ENCODE measurements at regions of chr12 and their contacts with region 1.

Region 1: GRCh38 chr12:84124211-84124610 is 788.4 kb downstream of the SLC6A15 start:
- DNase-seq: no peak
- H3K4me3 Mint-ChIP-seq: no peak overlapping the region
- H3K27ac Mint-ChIP-seq: no peak overlapping the region
- H3K4me1 Mint-ChIP-seq: no peaks in the 10 kb centered on the region
- H3K27me3 Mint-ChIP-seq: no peaks in the 10 kb centered on the region
- CTCF ChIP-seq: no peak

Region 2: DNA sequence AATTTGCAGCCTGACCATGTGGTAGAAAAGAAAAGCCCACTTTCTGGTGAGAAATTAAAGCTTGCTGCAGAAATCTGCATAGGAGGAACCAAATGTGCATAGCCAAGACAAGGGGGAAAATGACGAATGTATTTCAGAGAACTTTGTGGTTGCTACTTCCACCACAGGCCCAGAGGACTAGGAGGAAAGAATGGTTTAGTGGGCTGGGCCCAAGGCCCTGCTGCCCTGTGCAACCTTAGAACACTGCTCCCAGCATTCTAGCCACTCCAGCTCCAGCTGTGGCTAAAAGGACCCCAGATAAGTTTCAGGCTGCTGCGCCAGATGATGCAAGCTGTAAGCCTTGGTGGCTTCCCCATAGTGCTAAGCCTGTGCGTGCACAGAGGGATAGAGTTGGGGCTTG is 24.1 kb after region 1 on chr12:
- CTCF ChIA-PET with region 1: interaction called, 3 read pairs
- POLR2A ChIA-PET with region 1: no interaction called
- intact Hi-C with region 1: loop called (anchors 1 kb)
- DNase-seq: no peak
- H3K4me3 Mint-ChIP-seq: no peak overlapping the region
- H3K27ac Mint-ChIP-seq: no peak overlapping the region
- H3K4me1 Mint-ChIP-seq: peaks cover 6% of the 10 kb centered on the region
- H3K27me3 Mint-ChIP-seq: no peaks in the 10 kb centered on the region
- CTCF ChIP-seq: no peak

Region 3: DNA sequence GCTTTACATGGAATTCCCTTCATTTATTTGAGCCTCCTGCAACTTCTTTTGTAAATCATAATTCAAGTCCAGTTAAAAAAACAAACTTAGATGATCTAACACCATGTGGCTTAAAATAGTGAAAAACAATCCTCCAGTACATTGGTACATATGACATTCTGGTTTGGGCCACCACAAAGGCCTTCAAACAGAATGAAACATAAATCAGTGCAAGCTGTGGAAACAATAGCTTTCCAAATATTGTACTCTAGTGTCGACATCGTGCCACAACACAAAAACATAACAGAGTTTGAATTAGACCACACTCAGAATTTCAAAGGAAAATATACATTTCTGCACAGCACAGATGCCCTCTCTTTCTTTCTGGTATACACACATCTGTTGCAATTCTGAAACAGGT is 37.1 kb after region 1 on chr12:
- CTCF ChIA-PET with region 1: no interaction called
- POLR2A ChIA-PET with region 1: no interaction called
- intact Hi-C with region 1: no loop called
- DNase-seq: no peak
- H3K4me3 Mint-ChIP-seq: no peak overlapping the region
- H3K27ac Mint-ChIP-seq: no peak overlapping the region
- H3K4me1 Mint-ChIP-seq: no peaks in the 10 kb centered on the region
- H3K27me3 Mint-ChIP-seq: no peaks in the 10 kb centered on the region
- CTCF ChIP-seq: no peak

Measured in MCF 10A (cell line).